Caco-2 (cell line): ENCODE measurements at regions of chr1 and their contacts with region 1.

Region 1: GRCh38 chr1:197252973-197253372 is 15.1 kb upstream of the CRB1 start:
- DNase-seq: peak in 1 of 2 experiments; percentile 22
- H3K4me3 ChIP-seq: no peak overlapping the region
- H3K4me3 Mint-ChIP-seq: no peak overlapping the region
- H3K27ac Mint-ChIP-seq: no peak overlapping the region
- H3K4me1 ChIP-seq: no peaks in the 10 kb centered on the region
- H3K4me1 Mint-ChIP-seq: peaks cover 15% of the 10 kb centered on the region
- H3K27me3 ChIP-seq: no peaks in the 10 kb centered on the region
- H3K27me3 Mint-ChIP-seq: peaks cover 3% of the 10 kb centered on the region
- CTCF ChIP-seq: no peak

Region 2: DNA sequence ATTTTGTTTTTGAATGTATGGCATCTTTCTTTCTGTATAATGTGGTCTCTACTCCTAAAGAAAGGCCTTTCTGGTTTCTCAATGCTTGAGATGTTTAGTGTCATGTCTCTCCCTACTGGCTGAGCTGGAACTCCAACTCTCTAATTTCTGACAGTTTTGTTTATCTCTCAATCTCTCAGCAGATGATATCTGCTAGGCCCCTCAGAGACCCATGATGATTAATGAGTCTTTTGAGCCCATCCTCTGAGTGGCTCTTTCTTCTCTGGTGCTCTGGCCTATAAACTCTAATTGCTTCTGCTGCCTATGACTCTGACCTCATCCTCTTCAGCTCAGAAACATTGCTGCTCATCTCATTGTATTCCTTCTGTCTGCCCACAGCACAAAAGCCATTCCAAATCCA is 61.7 kb after region 1 on chr1:
- CTCF ChIA-PET with region 1: no interaction called
- POLR2A ChIA-PET with region 1: no interaction called
- intact Hi-C with region 1: loop called (anchors 2 kb)
- DNase-seq: no peak
- H3K4me3 ChIP-seq: no peak overlapping the region
- H3K4me3 Mint-ChIP-seq: no peak overlapping the region
- H3K27ac Mint-ChIP-seq: no peak overlapping the region
- H3K4me1 ChIP-seq: peaks cover 21% of the 10 kb centered on the region
- H3K4me1 Mint-ChIP-seq: peaks cover 21% of the 10 kb centered on the region
- H3K27me3 ChIP-seq: no peaks in the 10 kb centered on the region
- H3K27me3 Mint-ChIP-seq: no peaks in the 10 kb centered on the region
- CTCF ChIP-seq: no peak